ENCODE measurements at regions of chr18 and their contacts with region 1.

Region 1: GRCh38 chr18:24014062-24014985 is at the start of gene TTC39C:
- DNase-seq: peak; percentile 58 to 90 (median 77)
- ATAC-seq: peak; percentile 60
- H3K4me3 ChIP-seq: peak within 1 kb of the TSS; percentile 91
- H3K4me3 Mint-ChIP-seq: peak within 1 kb of the TSS; percentile 94
- H3K27ac ChIP-seq: peak within 1 kb of the TSS; percentile 73 to 88
- H3K27ac Mint-ChIP-seq: peak within 1 kb of the TSS; percentile 90
- H3K4me1 ChIP-seq: peaks cover 67% of the 10 kb centered on the region
- H3K4me1 Mint-ChIP-seq: peaks cover 80% of the 10 kb centered on the region
- H3K27me3 ChIP-seq: no peaks in the 10 kb centered on the region
- H3K27me3 Mint-ChIP-seq: no peaks in the 10 kb centered on the region
- CTCF ChIP-seq: no peak
- total RNA-seq, gene TTC39C: 82.6 to 91.8 TPM

Region 2: GRCh38 chr18:23503038-23503962 is 511.0 kb before region 1 on chr18 and contains the start of gene RMC1:
- CTCF ChIA-PET with region 1: no interaction called
- POLR2A ChIA-PET with region 1: no interaction called
- intact Hi-C with region 1: loop called in 1 of 2 experiments (anchors 5 kb)
- DNase-seq: peak; percentile 92 to 99 (median 97)
- ATAC-seq: peak; percentile 89
- H3K4me3 ChIP-seq: peak within 1 kb of the TSS; percentile 76
- H3K4me3 Mint-ChIP-seq: peak within 1 kb of the TSS; percentile 91
- H3K27ac ChIP-seq: peak within 1 kb of the TSS; percentile 86 to 89
- H3K27ac Mint-ChIP-seq: peak within 1 kb of the TSS; percentile 91
- H3K4me1 ChIP-seq: peaks cover 45% of the 10 kb centered on the region
- H3K4me1 Mint-ChIP-seq: peaks cover 51% of the 10 kb centered on the region
- H3K27me3 ChIP-seq: no peaks in the 10 kb centered on the region
- H3K27me3 Mint-ChIP-seq: no peaks in the 10 kb centered on the region
- CTCF ChIP-seq: no peak
- total RNA-seq, gene RMC1: 46.9 to 48.3 TPM

Region 3: DNA sequence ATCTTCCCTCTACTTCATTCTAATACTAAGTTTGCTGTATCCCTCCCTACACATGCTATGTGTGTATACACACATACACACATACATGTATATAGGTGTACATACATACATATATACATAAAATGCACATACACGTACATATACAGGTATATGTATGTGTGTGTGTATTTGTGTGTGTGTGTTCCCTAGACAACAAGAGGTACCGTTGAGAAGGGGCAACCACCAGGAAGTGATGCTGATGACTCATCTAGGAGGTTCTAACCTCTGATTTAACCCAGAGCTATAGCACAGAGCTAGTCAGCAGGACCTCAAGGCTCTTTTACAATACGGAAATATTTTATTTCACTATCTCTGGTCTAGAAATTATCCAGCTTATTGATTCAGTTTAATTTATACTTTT is 185.9 kb before region 1 on chr18:
- CTCF ChIA-PET with region 1: no interaction called
- POLR2A ChIA-PET with region 1: no interaction called
- intact Hi-C with region 1: loop called in 1 of 2 experiments (anchors 5 kb)
- DNase-seq: peak in 12 of 14 experiments; percentile 4 to 91 (median 36)
- ATAC-seq: peak; percentile 96
- H3K4me3 ChIP-seq: no peak overlapping the region
- H3K4me3 Mint-ChIP-seq: no peak overlapping the region
- H3K27ac ChIP-seq: peak overlapping the region in 1 of 2 donors; percentile 70
- H3K27ac Mint-ChIP-seq: peak overlapping the region; percentile 25
- H3K4me1 ChIP-seq: peaks cover 15% of the 10 kb centered on the region
- H3K4me1 Mint-ChIP-seq: peaks cover 33% of the 10 kb centered on the region
- H3K27me3 ChIP-seq: no peaks in the 10 kb centered on the region
- H3K27me3 Mint-ChIP-seq: no peaks in the 10 kb centered on the region
- CTCF ChIP-seq: no peak

Region 4: DNA sequence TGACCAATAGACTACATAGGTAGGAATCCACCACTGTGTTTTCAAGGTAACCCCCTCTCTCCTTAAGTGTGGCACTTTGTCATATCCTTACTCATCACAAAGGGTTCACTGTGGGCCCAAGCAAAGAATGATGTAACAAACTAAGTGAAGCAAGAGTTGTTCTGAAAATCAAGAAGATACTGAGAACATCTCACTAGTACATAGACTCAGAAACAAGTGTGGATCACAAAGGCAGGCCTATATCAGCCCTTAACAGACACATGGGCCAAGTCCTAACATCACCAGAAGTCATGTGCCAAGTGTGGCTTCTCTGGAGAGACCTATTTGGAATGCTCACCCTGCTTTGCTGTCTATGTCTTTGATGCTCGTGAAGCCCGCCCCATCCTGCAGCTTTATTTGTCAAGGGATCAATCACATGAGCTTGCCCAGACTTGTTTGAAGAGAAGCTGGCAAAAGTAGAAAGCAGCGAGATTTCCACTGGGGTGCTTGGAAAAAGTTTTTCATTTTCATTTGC is 131.0 kb before region 1 on chr18:
- CTCF ChIA-PET with region 1: no interaction called
- POLR2A ChIA-PET with region 1: no interaction called
- intact Hi-C with region 1: no loop called
- DNase-seq: no peak
- ATAC-seq: no peak
- H3K4me3 ChIP-seq: no peak overlapping the region
- H3K4me3 Mint-ChIP-seq: no peak overlapping the region
- H3K27ac ChIP-seq: no peak overlapping the region
- H3K27ac Mint-ChIP-seq: no peak overlapping the region
- H3K4me1 ChIP-seq: peaks cover 21% of the 10 kb centered on the region
- H3K4me1 Mint-ChIP-seq: peaks cover 29% of the 10 kb centered on the region
- H3K27me3 ChIP-seq: no peaks in the 10 kb centered on the region
- H3K27me3 Mint-ChIP-seq: no peaks in the 10 kb centered on the region
- CTCF ChIP-seq: no peak

Region 5: GRCh38 chr18:23934252-23934651 is 80.1 kb before region 1 on chr18:
- CTCF ChIA-PET with region 1: no interaction called
- POLR2A ChIA-PET with region 1: no interaction called
- intact Hi-C with region 1: loop called in 1 of 2 experiments (anchors 5 kb)
- DNase-seq: no peak
- ATAC-seq: no peak
- H3K4me3 ChIP-seq: no peak overlapping the region
- H3K4me3 Mint-ChIP-seq: no peak overlapping the region
- H3K27ac ChIP-seq: no peak overlapping the region
- H3K27ac Mint-ChIP-seq: peak overlapping the region; percentile 39
- H3K4me1 ChIP-seq: peaks cover 64% of the 10 kb centered on the region
- H3K4me1 Mint-ChIP-seq: peaks cover 66% of the 10 kb centered on the region
- H3K27me3 ChIP-seq: no peaks in the 10 kb centered on the region
- H3K27me3 Mint-ChIP-seq: no peaks in the 10 kb centered on the region
- CTCF ChIP-seq: no peak

Region 6: DNA sequence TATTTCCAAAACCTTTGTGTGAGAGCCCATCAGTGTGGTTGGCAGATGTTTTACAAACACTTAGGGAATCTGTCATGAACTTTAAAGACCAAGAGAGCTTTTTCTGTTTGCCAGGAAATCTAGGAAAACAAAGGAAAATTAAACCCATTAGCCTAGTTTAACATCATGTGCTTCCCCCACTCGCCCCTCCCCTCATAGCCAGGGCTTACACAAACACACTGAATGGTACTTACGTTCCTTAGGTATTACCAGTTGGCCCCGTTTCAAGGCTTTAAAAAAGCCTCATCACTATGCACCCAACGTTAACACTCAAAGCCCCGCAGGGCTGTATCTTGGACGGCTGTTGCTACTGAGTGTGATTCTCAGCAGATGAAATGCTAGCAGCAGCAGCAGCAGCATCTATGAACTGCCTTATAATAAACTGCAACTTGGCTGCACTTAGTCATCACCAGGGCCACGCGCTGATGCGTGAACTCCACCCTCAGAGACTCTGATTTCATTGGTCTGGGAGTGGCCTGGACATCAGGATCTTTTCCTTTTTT is 19.9 kb before region 1 on chr18:
- CTCF ChIA-PET with region 1: interaction called, 4 read pairs
- POLR2A ChIA-PET with region 1: interaction called, 33 read pairs
- intact Hi-C with region 1: loop called in 1 of 2 experiments (anchors 1 kb)
- DNase-seq: peak in 9 of 14 experiments; percentile 20 to 66 (median 42)
- ATAC-seq: peak; percentile 18
- H3K4me3 ChIP-seq: peak overlapping the region; percentile 50
- H3K4me3 Mint-ChIP-seq: peak overlapping the region; percentile 78
- H3K27ac ChIP-seq: peak overlapping the region; percentile 32 to 82
- H3K27ac Mint-ChIP-seq: peak overlapping the region; percentile 95
- H3K4me1 ChIP-seq: peaks cover 58% of the 10 kb centered on the region
- H3K4me1 Mint-ChIP-seq: peaks cover 75% of the 10 kb centered on the region
- H3K27me3 ChIP-seq: no peaks in the 10 kb centered on the region
- H3K27me3 Mint-ChIP-seq: no peaks in the 10 kb centered on the region
- CTCF ChIP-seq: no peak

Region 7: DNA sequence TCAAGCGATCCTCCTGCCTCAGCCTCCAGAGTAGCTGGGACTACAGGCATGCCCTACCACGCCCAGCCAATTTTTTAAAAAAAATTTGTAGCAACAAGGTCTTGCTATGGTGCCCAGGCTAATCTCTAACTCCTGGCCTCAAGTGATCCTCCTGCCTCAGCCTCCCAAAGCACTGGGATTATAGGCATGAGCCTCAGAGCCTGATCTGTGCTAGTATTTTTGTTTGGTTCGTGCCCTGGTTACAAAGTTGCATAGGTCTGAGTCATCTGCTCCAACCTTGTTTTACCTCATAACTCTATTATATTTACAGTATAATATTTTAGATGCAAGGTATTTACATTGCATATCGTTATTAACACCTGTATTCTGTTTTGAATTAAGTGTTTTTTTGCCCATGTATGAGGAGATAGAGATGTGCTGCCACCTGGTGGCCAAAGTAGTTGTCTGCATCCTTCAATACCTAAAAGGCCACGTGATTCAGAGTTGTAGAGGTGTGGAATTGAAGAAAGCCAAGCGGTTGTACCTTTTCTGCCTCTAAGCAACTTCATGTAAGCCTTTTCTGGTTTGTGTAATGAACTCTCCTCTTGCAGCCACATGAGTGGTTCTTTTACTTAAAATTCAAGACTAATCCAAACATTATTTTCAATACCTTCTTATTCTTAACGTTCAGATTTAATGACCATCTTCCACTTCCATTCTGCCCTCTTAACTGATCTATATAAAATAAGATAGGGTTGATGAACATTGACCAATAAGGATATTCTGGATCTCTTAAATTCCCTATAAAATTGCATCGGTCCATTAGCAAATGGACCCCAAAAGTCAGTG is 104.6 kb after region 1 on chr18:
- CTCF ChIA-PET with region 1: no interaction called
- POLR2A ChIA-PET with region 1: interaction called, 3 read pairs
- intact Hi-C with region 1: loop called (anchors 2 kb)
- DNase-seq: peak; percentile 69 to 92 (median 76)
- ATAC-seq: peak; percentile 90
- H3K4me3 ChIP-seq: no peak overlapping the region
- H3K4me3 Mint-ChIP-seq: no peak overlapping the region
- H3K27ac ChIP-seq: no peak overlapping the region
- H3K27ac Mint-ChIP-seq: peak overlapping the region; percentile 73
- H3K4me1 ChIP-seq: peaks cover 6% of the 10 kb centered on the region
- H3K4me1 Mint-ChIP-seq: peaks cover 42% of the 10 kb centered on the region
- H3K27me3 ChIP-seq: no peaks in the 10 kb centered on the region
- H3K27me3 Mint-ChIP-seq: no peaks in the 10 kb centered on the region
- CTCF ChIP-seq: peak; percentile 91

Region 8: DNA sequence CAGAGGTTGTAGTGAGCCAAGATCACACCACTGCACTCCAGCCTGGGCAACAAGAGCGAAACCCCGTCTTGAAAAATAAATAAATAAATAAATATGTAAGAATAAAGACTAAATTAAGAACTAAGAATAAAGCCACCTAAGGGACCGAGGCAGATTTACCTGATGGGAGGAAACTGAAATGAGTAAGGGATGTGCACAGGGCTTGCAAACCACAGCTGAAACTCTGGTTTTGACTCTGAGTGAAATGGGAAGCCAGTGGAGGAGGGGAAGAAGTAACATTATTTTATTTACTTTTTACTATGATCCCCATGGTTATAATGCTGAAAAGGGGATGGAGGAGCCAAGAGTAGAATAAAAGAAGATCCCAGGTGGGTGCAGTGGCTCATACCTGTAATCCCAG is 231.8 kb after region 1 on chr18:
- CTCF ChIA-PET with region 1: no interaction called
- POLR2A ChIA-PET with region 1: no interaction called
- intact Hi-C with region 1: no loop called
- DNase-seq: no peak
- ATAC-seq: no peak
- H3K4me3 ChIP-seq: no peak overlapping the region
- H3K4me3 Mint-ChIP-seq: no peak overlapping the region
- H3K27ac ChIP-seq: no peak overlapping the region
- H3K27ac Mint-ChIP-seq: no peak overlapping the region
- H3K4me1 ChIP-seq: no peaks in the 10 kb centered on the region
- H3K4me1 Mint-ChIP-seq: no peaks in the 10 kb centered on the region
- H3K27me3 ChIP-seq: peaks cover 0 to under 1% of the 10 kb centered on the region in 2 experiments
- H3K27me3 Mint-ChIP-seq: no peaks in the 10 kb centered on the region
- CTCF ChIP-seq: no peak